Heart right ventricle (tissue), 16 donors: ENCODE measurements at regions of chr15 and their contacts with region 1.

Region 1: DNA sequence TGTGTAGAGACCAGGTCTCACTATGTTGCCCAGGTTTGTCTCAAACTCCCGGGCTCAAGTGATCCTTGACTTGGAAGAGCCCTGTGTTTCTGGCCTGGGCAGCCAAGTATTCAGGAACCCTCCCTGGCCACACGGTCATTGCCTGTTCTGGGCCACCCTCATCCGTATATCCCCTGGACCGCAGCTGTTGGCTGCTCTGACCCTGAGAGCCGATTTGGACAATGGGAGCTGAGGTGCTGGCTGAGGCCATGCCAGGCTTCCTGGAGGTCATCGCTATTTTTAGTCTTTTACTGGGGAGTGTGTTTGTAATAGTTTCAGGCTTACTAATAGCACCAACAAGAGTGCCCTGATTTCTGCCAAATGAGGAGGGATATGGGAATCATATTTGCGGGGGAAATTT is 60.7 kb downstream of the ADAMTS7 start:
- DNase-seq: no peak
- ATAC-seq: peak; percentile 50 to 73 (median 62)
- H3K4me3 ChIP-seq: peak overlapping the region in 6 of 10 donors; percentile 14 to 38 (median 26)
- H3K27ac ChIP-seq: peak overlapping the region in 8 of 10 donors; percentile 38 to 73 (median 63)
- H3K4me1 ChIP-seq: peaks cover 0 to 49% (median 13%) of the 10 kb centered on the region in 9 donors
- H3K27me3 ChIP-seq: no peaks in the 10 kb centered on the region
- CTCF ChIP-seq: no peak

Region 2: GRCh38 chr15:78872972-78873792 is 122.6 kb after region 1 on chr15:
- intact Hi-C with region 1: loop called in 1 of 10 experiments (anchors 10 kb)
- DNase-seq: peak; percentile 81 to 86
- ATAC-seq: peak; percentile 72 to 84 (median 78)
- H3K4me3 ChIP-seq: peak overlapping the region; percentile 57 to 100 (median 93)
- H3K27ac ChIP-seq: peak overlapping the region; percentile 92 to 100 (median 100)
- H3K4me1 ChIP-seq: peaks cover 6 to 48% (median 41%) of the 10 kb centered on the region in 9 donors
- H3K27me3 ChIP-seq: no peaks in the 10 kb centered on the region
- CTCF ChIP-seq: peak in 8 of 9 donors; percentile 13 to 58 (median 40)

Region 3: DNA sequence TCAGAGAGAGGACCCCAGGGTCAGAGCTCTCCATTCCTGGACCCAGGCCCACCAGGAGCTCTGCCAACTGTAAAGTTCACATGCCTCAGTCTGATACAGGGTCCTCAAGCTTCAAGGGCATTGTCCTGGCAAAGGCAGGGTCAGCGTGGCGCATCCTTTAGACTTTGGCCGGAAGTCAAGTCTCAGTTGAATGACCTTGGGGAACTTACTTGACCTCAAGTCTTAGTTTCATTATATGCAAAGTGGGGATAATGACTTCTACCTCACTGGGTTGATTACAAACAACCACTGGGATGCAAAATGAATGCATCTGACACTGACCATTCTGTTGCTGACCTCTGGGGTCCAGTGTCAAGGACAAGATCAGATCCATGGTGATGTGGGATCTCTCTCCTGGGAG is 264.9 kb after region 1 on chr15:
- intact Hi-C with region 1: no loop called
- DNase-seq: no peak
- ATAC-seq: no peak
- H3K4me3 ChIP-seq: no peak overlapping the region
- H3K27ac ChIP-seq: no peak overlapping the region
- H3K4me1 ChIP-seq: no peaks in the 10 kb centered on the region
- H3K27me3 ChIP-seq: peaks cover 0 to 5% (median 0%) of the 10 kb centered on the region in 7 donors
- CTCF ChIP-seq: no peak